ENCODE measurements at regions of chr21 and their contacts with region 1.

Region 1: GRCh38 chr21:17679002-17679600 is 66.4 kb upstream of the BTG3 start:
- DNase-seq: no peak
- H3K4me3 ChIP-seq: no peak overlapping the region
- H3K27ac ChIP-seq: no peak overlapping the region
- H3K4me1 ChIP-seq: no peaks in the 10 kb centered on the region
- H3K27me3 ChIP-seq: no peaks in the 10 kb centered on the region
- CTCF ChIP-seq: peak; percentile 81 to 85 (median 84)
- EP300 ChIP-seq: no peak
- POLR2A ChIP-seq: no peak

Region 2: DNA sequence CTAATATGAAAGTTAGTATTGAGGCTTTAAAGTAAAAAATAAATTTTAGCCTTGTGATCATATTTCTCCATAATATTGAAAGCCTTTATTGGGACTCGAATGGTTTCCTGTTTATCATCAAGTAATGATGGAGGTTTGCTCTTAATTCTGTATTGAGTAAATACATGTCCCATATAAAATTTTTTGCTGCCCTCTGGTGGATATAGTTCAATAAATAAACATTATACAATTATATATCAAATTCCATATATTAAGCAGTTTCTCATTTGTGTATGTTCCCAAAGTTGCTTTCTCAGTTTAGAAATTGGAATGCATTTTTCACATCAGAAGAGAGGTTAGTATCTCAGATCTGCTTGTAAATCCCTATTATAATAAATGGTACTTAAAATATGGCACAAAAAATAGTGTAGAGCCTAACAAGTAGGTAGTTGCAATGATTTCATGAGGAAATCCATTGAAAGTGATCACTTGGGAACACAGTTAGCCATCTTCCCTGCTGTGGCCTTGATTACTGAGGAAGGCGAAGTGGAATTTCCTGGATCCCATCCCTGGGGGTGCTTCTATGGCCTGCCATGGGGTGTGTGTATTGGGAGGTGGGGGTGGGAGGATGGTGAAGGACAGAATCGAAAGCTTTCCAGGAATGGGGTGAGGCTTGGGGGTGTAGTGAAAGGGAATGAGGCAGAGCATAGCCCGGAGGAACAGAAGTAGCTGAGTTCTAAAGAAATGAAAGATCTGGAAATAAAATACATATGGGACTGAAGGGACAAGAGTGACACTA is 224.1 kb after region 1 on chr21:
- intact Hi-C with region 1: loop called (anchors 2 kb)
- DNase-seq: no peak
- H3K4me3 ChIP-seq: no peak overlapping the region
- H3K27ac ChIP-seq: no peak overlapping the region
- H3K4me1 ChIP-seq: peaks cover 0 to 10% (median 5%) of the 10 kb centered on the region in 4 donors
- H3K27me3 ChIP-seq: no peaks in the 10 kb centered on the region
- CTCF ChIP-seq: peak; percentile 6 to 31 (median 26)
- EP300 ChIP-seq: no peak
- POLR2A ChIP-seq: no peak

Region 3: DNA sequence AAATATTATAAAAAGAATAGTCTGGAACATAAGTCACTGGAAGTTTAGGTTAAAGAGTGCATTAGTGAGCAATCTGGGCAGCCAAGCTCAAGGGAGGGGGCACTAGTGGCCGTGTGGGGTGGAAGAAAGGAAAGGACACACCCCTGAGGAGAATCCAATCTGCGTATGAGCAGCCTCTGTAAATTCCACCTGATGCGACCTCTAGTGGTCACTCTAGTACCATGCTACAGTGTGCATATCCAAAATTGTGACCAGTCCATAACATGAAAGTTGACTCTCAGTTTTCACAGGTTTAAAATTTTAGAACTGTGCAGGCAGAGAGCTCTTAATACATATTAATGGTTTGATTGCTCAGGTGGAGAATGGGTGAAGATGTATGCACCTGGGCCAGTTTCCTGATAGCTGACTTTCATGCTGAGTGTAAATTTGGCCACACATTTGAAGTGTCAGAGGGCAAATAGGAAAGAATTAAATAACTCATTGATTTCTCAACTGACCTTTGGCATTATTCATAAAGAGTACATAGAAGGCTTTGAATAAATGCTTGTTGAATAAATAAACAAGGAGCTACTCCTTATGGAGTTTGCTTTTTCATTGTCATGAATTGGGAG is 246.0 kb after region 1 on chr21:
- intact Hi-C with region 1: loop called (anchors 2 kb)
- DNase-seq: no peak
- H3K4me3 ChIP-seq: no peak overlapping the region
- H3K27ac ChIP-seq: no peak overlapping the region
- H3K4me1 ChIP-seq: peaks cover 0 to 12% (median 4%) of the 10 kb centered on the region in 4 donors
- H3K27me3 ChIP-seq: no peaks in the 10 kb centered on the region
- CTCF ChIP-seq: peak; percentile 65 to 86 (median 76)
- EP300 ChIP-seq: no peak
- POLR2A ChIP-seq: no peak

Measured in esophagus muscularis mucosa (tissue), 4 donors.